ENCODE measurements at regions of chr22 and their contacts with region 1.

Region 1: GRCh38 chr22:50200461-50201190 is at the start of gene SELENOO:
- DNase-seq: peak; percentile 82 to 90
- H3K4me3 ChIP-seq: peak within 1 kb of the TSS; percentile 66 to 89 (median 76)
- H3K27ac ChIP-seq: peak within 1 kb of the TSS; percentile 71 to 90
- H3K4me1 ChIP-seq: no peaks in the 10 kb centered on the region
- H3K27me3 ChIP-seq: no peaks in the 10 kb centered on the region
- CTCF ChIP-seq: no peak
- POLR2A ChIP-seq: no peak
- total RNA-seq, gene SELENOO: 24.3 to 32.3 (median 31.8) TPM

Region 2: GRCh38 chr22:50157709-50158375 is 42.8 kb before region 1 on chr22:
- intact Hi-C with region 1: loop called (anchors 10 kb)
- DNase-seq: peak; percentile 83 to 85
- H3K4me3 ChIP-seq: peak overlapping the region in 1 of 3 donors; percentile 37
- H3K27ac ChIP-seq: peak overlapping the region; percentile 44 to 54
- H3K4me1 ChIP-seq: no peaks in the 10 kb centered on the region
- H3K27me3 ChIP-seq: no peaks in the 10 kb centered on the region
- CTCF ChIP-seq: no peak
- POLR2A ChIP-seq: no peak